ENCODE measurements at regions of chr16 and their contacts with region 1.

Region 1: GRCh38 chr16:7744546-7745264 is 412.1 kb downstream of the RBFOX1 start:
- DNase-seq: no peak
- H3K4me3 ChIP-seq: no peak overlapping the region
- H3K27ac ChIP-seq: peak overlapping the region in 2 of 4 donors; percentile 34 to 60
- H3K4me1 ChIP-seq: peaks cover 0 to 24% (median 0%) of the 10 kb centered on the region in 4 donors
- H3K27me3 ChIP-seq: no peaks in the 10 kb centered on the region
- CTCF ChIP-seq: no peak
- EP300 ChIP-seq: no peak
- POLR2A ChIP-seq: no peak

Region 2: GRCh38 chr16:7456211-7456610 is 288.5 kb before region 1 on chr16:
- intact Hi-C with region 1: no loop called
- DNase-seq: no peak
- H3K4me3 ChIP-seq: no peak overlapping the region
- H3K27ac ChIP-seq: no peak overlapping the region
- H3K4me1 ChIP-seq: no peaks in the 10 kb centered on the region
- H3K27me3 ChIP-seq: no peaks in the 10 kb centered on the region
- CTCF ChIP-seq: no peak
- EP300 ChIP-seq: no peak
- POLR2A ChIP-seq: no peak

Region 3: DNA sequence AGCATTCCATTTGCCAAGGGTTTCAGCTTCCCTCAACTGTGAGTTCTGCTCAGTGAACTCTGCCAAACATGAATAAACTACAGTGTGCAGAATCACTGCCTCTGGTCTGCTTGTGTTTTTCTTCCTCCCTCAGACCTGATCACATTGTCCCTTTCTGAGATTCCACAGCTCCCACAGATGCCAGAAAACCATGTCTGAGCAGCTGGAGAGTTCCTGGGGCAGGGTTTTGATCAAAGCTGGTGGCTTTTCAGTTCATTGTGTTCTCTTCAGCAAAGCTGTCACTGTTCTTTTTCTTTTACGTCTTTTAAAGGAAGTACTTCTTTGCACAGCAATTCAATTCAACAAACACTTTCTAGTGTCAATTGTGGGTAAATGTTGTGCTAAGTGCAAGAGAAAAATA is 143.7 kb after region 1 on chr16:
- intact Hi-C with region 1: loop called (anchors 5 kb)
- DNase-seq: no peak
- H3K4me3 ChIP-seq: no peak overlapping the region
- H3K27ac ChIP-seq: peak overlapping the region in 2 of 4 donors; percentile 61 to 63
- H3K4me1 ChIP-seq: peaks cover 0 to 24% (median 15%) of the 10 kb centered on the region in 4 donors
- H3K27me3 ChIP-seq: no peaks in the 10 kb centered on the region
- CTCF ChIP-seq: no peak
- EP300 ChIP-seq: peak in 1 of 4 donors; percentile 72
- POLR2A ChIP-seq: no peak